ENCODE measurements at regions of chrX and their contacts with region 1.

Region 1: DNA sequence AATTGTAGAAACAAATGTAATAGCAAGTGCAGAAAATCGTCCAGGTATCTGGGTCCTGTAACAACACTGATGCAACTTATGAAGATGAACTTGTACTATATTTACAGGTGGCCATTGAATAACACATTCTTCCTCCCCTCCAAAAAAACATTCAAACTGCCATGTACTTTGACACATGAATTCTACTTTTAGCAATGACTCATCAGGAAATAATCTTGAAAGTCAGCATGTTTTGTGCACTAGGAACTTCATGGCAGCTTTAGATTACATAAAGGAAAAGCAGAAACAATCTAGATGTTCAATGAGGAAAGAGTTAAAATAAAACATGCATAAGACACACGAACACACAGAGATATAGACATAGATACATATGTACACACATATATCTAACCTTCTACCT is 2.5 kb downstream of the PABPC1L2A start:
- DNase-seq: no peak
- H3K4me3 ChIP-seq: no peak overlapping the region
- H3K27ac ChIP-seq: no peak overlapping the region
- H3K4me1 ChIP-seq: no peaks in the 10 kb centered on the region
- H3K27me3 ChIP-seq: peaks cover 0 to 5% of the 10 kb centered on the region in 2 experiments
- CTCF ChIP-seq: no peak
- POLR2A ChIP-seq: no peak

Region 2: DNA sequence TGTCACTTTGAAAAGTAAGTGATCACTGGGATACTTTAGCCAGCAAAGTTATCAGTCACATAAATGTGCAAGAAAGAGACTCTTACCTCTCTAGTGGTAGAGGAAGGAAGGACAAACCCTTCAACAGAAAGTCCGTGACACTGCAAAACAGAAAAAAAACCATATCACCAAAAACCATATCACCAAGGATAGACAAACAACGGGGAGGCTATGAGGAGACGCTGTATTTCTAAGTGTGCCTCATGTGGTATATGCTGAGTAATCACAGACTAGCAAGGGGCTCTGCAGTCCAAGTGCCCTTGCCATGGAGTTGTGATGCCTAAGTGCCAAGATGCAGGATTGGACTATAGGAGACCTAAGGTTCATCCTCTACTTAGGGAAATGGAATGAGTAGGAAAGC is 492.7 kb before region 1 on chrX:
- CTCF ChIA-PET with region 1: no interaction called
- POLR2A ChIA-PET with region 1: no interaction called
- dilution Hi-C with region 1: no loop called
- intact Hi-C with region 1: no loop called
- DNase-seq: no peak
- H3K4me3 ChIP-seq: no peak overlapping the region
- H3K27ac ChIP-seq: no peak overlapping the region
- H3K4me1 ChIP-seq: no peaks in the 10 kb centered on the region
- H3K27me3 ChIP-seq: no peaks in the 10 kb centered on the region
- CTCF ChIP-seq: no peak
- POLR2A ChIP-seq: no peak

Region 3: DNA sequence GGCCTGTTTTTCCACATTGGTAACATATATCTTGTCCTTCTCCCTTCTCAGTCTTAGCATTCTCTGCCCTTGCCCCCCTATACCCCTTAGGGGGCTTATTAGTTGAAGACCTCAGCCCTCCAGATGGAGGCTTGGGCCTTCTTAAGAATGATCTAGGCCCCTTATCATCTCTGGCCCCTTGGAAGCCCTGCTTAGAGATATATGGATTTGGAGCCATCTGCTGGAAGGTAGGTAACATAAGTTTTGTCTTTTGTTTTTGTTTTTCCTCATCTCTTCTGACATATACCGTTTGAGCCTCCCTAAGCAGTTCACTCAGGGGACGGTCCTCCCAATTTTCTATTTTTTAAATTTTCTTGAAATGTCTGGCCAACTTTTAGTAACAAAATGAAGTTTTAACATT is 186.2 kb after region 1 on chrX:
- CTCF ChIA-PET with region 1: no interaction called
- POLR2A ChIA-PET with region 1: no interaction called
- dilution Hi-C with region 1: no loop called
- intact Hi-C with region 1: loop called (anchors 10 kb)
- DNase-seq: peak; percentile 0
- H3K4me3 ChIP-seq: no peak overlapping the region
- H3K27ac ChIP-seq: no peak overlapping the region
- H3K4me1 ChIP-seq: no peaks in the 10 kb centered on the region
- H3K27me3 ChIP-seq: no peaks in the 10 kb centered on the region
- CTCF ChIP-seq: no peak
- POLR2A ChIP-seq: no peak

Region 4: GRCh38 chrX:73847945-73848344 is 771.1 kb after region 1 on chrX:
- CTCF ChIA-PET with region 1: no interaction called
- POLR2A ChIA-PET with region 1: no interaction called
- dilution Hi-C with region 1: no loop called
- intact Hi-C with region 1: loop called (anchors 10 kb)
- DNase-seq: no peak
- H3K4me3 ChIP-seq: no peak overlapping the region
- H3K27ac ChIP-seq: no peak overlapping the region
- H3K4me1 ChIP-seq: no peaks in the 10 kb centered on the region
- H3K27me3 ChIP-seq: peaks cover 0 to 2% of the 10 kb centered on the region in 2 experiments
- CTCF ChIP-seq: no peak
- POLR2A ChIP-seq: no peak

Region 5: GRCh38 chrX:74015379-74016019 is 938.7 kb after region 1 on chrX:
- CTCF ChIA-PET with region 1: no interaction called
- POLR2A ChIA-PET with region 1: no interaction called
- dilution Hi-C with region 1: no loop called
- intact Hi-C with region 1: loop called (anchors 10 kb)
- DNase-seq: peak; percentile 70
- H3K4me3 ChIP-seq: no peak overlapping the region
- H3K27ac ChIP-seq: no peak overlapping the region
- H3K4me1 ChIP-seq: no peaks in the 10 kb centered on the region
- H3K27me3 ChIP-seq: no peaks in the 10 kb centered on the region
- CTCF ChIP-seq: peak; percentile 54
- POLR2A ChIP-seq: no peak

Region 6: GRCh38 chrX:74133156-74133796 is 1056.4 kb after region 1 on chrX:
- CTCF ChIA-PET with region 1: no interaction called
- POLR2A ChIA-PET with region 1: no interaction called
- dilution Hi-C with region 1: no loop called
- intact Hi-C with region 1: loop called (anchors 10 kb)
- DNase-seq: peak; percentile 39
- H3K4me3 ChIP-seq: no peak overlapping the region
- H3K27ac ChIP-seq: no peak overlapping the region
- H3K4me1 ChIP-seq: no peaks in the 10 kb centered on the region
- H3K27me3 ChIP-seq: no peaks in the 10 kb centered on the region
- CTCF ChIP-seq: peak; percentile 23 to 34
- POLR2A ChIP-seq: no peak

Measured in endothelial cell of umbilical vein (primary cell).